ENCODE measurements at regions of chr2 and their contacts with region 1.

Region 1: GRCh38 chr2:207662203-207662602 is 37.0 kb upstream of the METTL21A start:
- DNase-seq: peak; percentile 79
- ATAC-seq: peak; percentile 97
- H3K4me3 ChIP-seq: peak overlapping the region; percentile 30; the same call in 1 of the 2 replicates
- H3K27ac ChIP-seq: peak overlapping the region; percentile 61
- H3K4me1 ChIP-seq: peaks cover 10% of the 10 kb centered on the region
- H3K27me3 ChIP-seq: no peaks in the 10 kb centered on the region
- CTCF ChIP-seq: no peak
- EP300 ChIP-seq: peak in 1 of 2 experiments; percentile 8; a peak in 1 of 4 replicates
- POLR2A ChIP-seq: peak; percentile 54
- RAD21 ChIP-seq: no peak

Region 2: GRCh38 chr2:207529330-207530159 is 132.7 kb before region 1 on chr2 and contains the start of gene CREB1:
- CTCF ChIA-PET with region 1: no interaction called
- POLR2A ChIA-PET with region 1: no interaction called
- RAD21 ChIA-PET with region 1: interaction called, 3 read pairs
- SMC1A ChIA-PET with region 1: interaction called, 3 read pairs
- in situ Hi-C with region 1: no loop called
- intact Hi-C with region 1: loop called (anchors 2 kb)
- DNase-seq: peak; percentile 93
- ATAC-seq: peak; percentile 87
- H3K4me3 ChIP-seq: peak within 1 kb of the TSS; percentile 97
- H3K27ac ChIP-seq: peak within 1 kb of the TSS; percentile 99
- H3K4me1 ChIP-seq: peaks cover 26% of the 10 kb centered on the region
- H3K27me3 ChIP-seq: no peaks in the 10 kb centered on the region
- CTCF ChIP-seq: no peak; a peak in 1 of 6 replicates
- EP300 ChIP-seq: peak; percentile 77 to 79; a peak in 2 of 4 replicates
- POLR2A ChIP-seq: peak; percentile 94
- RAD21 ChIP-seq: no peak
- polyA plus RNA-seq, gene CREB1: 13.4 to 22.2 TPM

Region 3: DNA sequence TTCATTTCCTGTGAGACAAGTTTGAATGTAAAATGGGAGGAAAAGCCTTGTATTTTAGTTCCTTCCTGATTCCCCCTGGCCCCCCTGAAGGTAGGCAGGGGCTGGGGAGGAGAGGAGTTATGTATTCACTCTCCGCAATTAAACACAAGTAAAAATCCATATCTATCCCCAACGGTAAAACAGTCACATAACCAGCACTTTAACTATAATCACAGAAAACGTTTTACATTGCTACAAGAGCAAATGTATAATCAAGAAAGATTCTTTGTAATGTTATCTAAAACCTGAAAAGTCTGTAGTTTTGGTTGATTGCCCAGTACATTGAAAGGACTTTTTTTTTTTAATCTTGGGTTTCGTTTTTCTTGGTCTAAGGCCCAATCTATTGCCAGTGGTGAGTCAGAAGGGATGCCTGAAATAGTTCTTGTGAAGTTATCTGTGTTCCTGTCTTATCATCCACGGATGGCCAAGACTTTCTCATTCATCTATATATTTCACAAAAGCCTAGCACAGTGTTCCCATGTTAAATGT is 14.7 kb after region 1 on chr2:
- CTCF ChIA-PET with region 1: interaction called, 3 read pairs
- POLR2A ChIA-PET with region 1: interaction called, 8 read pairs
- RAD21 ChIA-PET with region 1: interaction called, 10 read pairs
- SMC1A ChIA-PET with region 1: interaction called, 6 read pairs
- in situ Hi-C with region 1: no loop called
- intact Hi-C with region 1: no loop called
- DNase-seq: no peak
- ATAC-seq: peak; percentile 87
- H3K4me3 ChIP-seq: peak overlapping the region; percentile 3; the same call in 1 of the 2 replicates
- H3K27ac ChIP-seq: peak overlapping the region; percentile 63
- H3K4me1 ChIP-seq: no peaks in the 10 kb centered on the region
- H3K27me3 ChIP-seq: no peaks in the 10 kb centered on the region
- CTCF ChIP-seq: no peak
- EP300 ChIP-seq: no peak
- POLR2A ChIP-seq: no peak
- RAD21 ChIP-seq: no peak

Region 4: DNA sequence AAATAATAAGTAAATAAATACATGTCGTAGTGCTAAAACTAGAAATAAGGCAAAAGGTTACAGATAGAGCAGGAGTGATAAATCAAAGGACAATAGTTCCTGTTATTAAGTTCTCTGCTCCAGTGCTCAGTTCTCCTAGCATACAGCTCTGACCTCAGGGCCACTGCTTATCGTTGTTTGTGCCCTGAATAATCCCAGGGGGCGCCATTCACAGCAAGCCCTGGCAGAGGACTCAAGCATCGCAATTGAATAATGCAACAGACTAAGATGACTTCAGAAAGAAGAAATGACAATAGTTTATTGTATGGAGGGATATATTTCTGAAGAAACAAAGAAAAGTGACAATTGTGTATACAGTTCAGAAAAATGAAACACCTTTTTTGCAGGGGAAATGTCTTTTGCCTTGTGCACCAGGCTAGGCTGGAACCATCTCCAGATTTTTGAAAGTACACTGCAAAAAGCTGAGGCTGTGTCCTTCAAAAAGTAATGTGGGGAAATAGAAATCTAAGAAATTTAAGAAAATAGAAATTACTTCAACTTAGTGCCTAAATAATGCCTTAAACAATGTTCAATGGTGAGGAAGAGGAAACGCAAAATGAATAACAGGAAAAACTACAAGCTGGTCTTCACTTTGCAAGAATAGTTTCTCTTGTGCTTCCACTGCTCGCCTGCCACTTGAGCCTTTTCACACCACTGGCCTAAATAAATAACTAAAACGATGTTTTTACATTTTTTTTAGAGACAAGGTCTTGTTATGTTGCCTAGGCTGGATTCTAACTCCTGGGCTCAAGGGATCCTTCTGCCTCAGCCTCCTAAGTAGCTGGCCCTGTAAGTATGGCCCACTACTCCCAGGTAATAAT is 30.2 kb after region 1 on chr2:
- CTCF ChIA-PET with region 1: interaction called, 8 read pairs
- POLR2A ChIA-PET with region 1: no interaction called
- RAD21 ChIA-PET with region 1: no interaction called
- SMC1A ChIA-PET with region 1: interaction called, 10 read pairs
- in situ Hi-C with region 1: no loop called
- intact Hi-C with region 1: no loop called
- DNase-seq: no peak
- ATAC-seq: peak; percentile 85
- H3K4me3 ChIP-seq: no peak overlapping the region
- H3K27ac ChIP-seq: no peak overlapping the region
- H3K4me1 ChIP-seq: no peaks in the 10 kb centered on the region
- H3K27me3 ChIP-seq: no peaks in the 10 kb centered on the region
- CTCF ChIP-seq: peak; percentile 40 to 63 (median 60)
- EP300 ChIP-seq: no peak
- POLR2A ChIP-seq: no peak
- RAD21 ChIP-seq: peak; percentile 51

Region 5: DNA sequence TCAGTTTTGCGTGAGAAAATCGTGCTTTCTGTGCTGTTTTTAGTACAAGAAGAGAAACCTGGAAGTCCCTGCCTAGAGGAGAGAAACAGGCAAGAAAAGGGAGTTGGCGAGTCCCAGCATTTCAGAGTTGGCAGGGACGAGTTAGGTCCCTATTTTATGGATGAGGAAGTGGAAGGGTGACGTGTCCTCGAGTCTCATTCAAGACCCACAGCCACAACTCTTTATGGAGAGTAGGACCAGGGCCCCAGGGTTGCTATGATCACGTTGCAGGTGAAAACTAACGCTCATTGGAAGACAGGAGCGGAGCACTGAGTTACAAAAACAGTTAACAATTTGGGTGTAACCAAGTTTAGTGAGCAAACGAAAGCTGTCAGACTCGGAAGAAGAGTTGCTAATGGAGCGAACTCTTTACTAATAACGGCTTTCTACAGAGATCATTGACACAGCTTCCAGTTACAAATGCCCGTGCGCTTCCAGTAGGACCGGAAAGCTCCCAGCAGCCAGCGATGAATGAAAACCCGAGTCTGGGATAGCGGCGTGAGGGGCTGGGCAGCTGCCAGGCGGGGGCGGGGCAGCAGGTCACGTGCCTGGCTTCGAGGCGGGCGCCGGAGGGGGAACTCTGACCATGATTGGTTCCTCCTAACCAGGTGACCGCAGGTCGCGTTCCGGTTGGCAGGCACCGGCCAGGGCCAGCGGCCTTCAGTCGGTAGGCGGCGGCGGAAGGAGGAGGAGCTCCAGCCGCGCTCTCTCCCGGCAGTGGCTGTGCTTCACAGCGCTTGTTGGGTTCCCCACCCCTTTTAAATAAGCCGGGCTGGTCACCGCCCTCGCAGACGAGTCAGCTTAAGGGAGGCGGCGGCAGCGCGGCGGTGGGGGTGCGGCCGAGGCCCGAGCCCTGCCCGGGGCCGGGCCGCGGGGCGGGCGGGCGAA is 48.9 kb after region 1 on chr2 and contains the start of gene CCNYL1:
- CTCF ChIA-PET with region 1: no interaction called
- POLR2A ChIA-PET with region 1: interaction called, 14 read pairs
- RAD21 ChIA-PET with region 1: interaction called, 5 read pairs
- SMC1A ChIA-PET with region 1: no interaction called
- in situ Hi-C with region 1: no loop called
- intact Hi-C with region 1: no loop called
- DNase-seq: peak; percentile 93
- ATAC-seq: peak; percentile 99
- H3K4me3 ChIP-seq: peak within 1 kb of the TSS; percentile 96
- H3K27ac ChIP-seq: peak within 1 kb of the TSS; percentile 75
- H3K4me1 ChIP-seq: no peaks in the 10 kb centered on the region
- H3K27me3 ChIP-seq: no peaks in the 10 kb centered on the region
- CTCF ChIP-seq: no peak
- EP300 ChIP-seq: no peak
- POLR2A ChIP-seq: peak; percentile 87
- RAD21 ChIP-seq: no peak
- polyA plus RNA-seq, gene CCNYL1: 2.4 to 3.7 TPM

Region 6: DNA sequence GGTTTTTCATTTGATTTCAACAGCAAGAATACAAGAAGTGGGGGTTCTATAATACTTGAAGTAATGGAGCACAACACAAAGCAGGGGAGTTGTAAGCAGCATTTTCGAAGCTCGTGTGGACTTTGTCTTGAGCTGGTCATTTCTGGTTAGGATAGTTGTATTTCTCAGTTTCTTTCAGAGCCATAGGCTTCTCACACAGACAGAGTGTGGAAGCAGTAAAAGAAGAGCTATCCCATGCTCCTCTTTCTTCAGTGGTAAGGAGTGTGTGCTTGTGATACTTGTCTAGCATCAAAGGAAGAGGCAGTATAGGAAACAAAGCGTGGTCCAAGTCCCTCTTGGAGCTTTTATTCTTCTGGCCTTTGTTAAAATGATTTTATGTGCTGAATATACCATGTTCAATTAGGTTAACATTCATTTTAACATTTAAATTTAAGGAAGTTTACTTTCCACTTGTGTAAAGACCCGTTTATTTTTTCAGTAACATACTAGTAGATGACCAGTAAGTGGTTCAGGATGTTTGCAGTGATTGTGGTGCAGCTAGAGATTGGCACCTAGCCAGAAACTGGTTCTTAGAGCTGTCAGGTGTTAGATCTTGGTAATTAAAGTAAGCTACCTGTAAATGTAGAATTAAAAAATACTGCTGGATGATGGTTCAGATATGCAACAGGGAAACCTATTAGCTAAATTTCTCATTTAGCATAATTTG is 63.8 kb after region 1 on chr2:
- CTCF ChIA-PET with region 1: interaction called, 3 read pairs
- POLR2A ChIA-PET with region 1: interaction called, 10 read pairs
- RAD21 ChIA-PET with region 1: interaction called, 4 read pairs
- SMC1A ChIA-PET with region 1: interaction called, 9 read pairs
- in situ Hi-C with region 1: no loop called
- intact Hi-C with region 1: loop called (anchors 5 kb)
- DNase-seq: no peak
- ATAC-seq: 0 out of 3 replicates have a peak, but pooled peaks have one; percentile 14
- H3K4me3 ChIP-seq: no peak overlapping the region
- H3K27ac ChIP-seq: no peak overlapping the region
- H3K4me1 ChIP-seq: peaks cover 3% of the 10 kb centered on the region; the same call in 1 of the 2 replicates
- H3K27me3 ChIP-seq: no peaks in the 10 kb centered on the region
- CTCF ChIP-seq: no peak
- EP300 ChIP-seq: no peak
- POLR2A ChIP-seq: no peak
- RAD21 ChIP-seq: no peak

Region 7: DNA sequence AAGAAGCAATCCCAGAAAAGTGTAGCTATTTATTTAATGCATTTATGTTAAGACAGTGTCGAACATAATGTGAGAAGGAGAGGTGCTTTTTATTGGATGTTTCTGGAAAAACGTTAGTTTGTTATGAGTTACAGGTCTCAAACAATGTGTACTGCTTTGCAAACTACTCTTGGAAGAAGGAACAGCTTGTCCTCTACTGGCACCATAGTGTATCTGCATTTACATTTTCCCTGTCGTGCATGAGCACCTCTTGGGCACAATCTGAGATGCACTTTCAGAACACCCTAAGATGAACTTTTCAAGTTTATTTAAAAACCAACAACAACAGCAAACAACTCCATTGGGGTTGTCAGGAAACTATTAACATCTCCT is 72.0 kb after region 1 on chr2:
- CTCF ChIA-PET with region 1: interaction called, 12 read pairs
- POLR2A ChIA-PET with region 1: no interaction called
- RAD21 ChIA-PET with region 1: interaction called, 5 read pairs
- SMC1A ChIA-PET with region 1: interaction called, 4 read pairs
- in situ Hi-C with region 1: no loop called
- intact Hi-C with region 1: no loop called
- DNase-seq: no peak
- ATAC-seq: peak; percentile 55
- H3K4me3 ChIP-seq: no peak overlapping the region
- H3K27ac ChIP-seq: no peak overlapping the region
- H3K4me1 ChIP-seq: no peaks in the 10 kb centered on the region
- H3K27me3 ChIP-seq: no peaks in the 10 kb centered on the region
- CTCF ChIP-seq: peak; percentile 42 to 58 (median 46); a peak in 4 of 6 replicates
- EP300 ChIP-seq: no peak
- POLR2A ChIP-seq: no peak
- RAD21 ChIP-seq: peak; percentile 58

Measured in GM12878 (cell line).